GM10248 (cell line): ENCODE measurements at regions of chr11 and their contacts with region 1.

Region 1: GRCh38 chr11:12043959-12044819 is 35.8 kb upstream of the DKK3 start:
- DNase-seq: peak; percentile 68
- CTCF ChIP-seq: peak; percentile 90

Region 2: DNA sequence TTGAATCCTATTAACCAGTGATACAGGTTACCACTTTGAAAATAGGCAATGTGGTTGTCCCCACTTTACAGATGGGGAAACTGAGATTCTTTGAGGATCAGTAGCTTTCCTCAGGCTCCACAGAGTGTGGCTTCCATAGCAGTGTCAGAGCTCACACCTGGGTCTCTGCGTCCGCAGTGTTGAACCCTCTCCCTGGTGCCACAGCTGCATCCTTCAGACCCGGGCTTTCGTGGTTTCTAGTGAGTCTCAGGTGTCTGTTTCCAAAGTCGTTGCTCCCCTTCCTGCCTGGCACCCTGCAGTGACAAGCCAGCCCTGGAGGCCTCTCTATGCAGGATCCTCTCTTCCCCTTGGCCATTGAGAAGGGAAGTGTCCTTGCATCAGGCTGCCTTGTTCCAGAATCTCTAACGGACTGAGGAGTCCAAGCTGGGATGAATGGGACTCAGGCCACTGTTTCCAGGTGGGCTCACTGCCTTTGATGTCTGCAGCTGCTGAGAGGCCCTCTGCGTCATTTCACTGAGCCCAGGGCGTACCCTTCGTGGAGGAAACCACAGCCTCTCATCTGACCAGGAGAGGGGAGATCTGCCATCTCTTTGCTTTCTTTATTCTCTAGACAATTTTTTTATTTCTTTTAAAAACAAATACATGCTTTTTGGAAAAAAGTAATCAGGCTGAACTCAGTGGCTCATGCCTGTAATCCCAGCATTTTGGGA is 17.8 kb after region 1 on chr11:
- CTCF ChIA-PET with region 1: interaction called, 12 read pairs
- POLR2A ChIA-PET with region 1: no interaction called
- DNase-seq: no peak
- CTCF ChIP-seq: no peak

Region 3: GRCh38 chr11:12122083-12122482 is 77.9 kb after region 1 on chr11:
- CTCF ChIA-PET with region 1: no interaction called
- POLR2A ChIA-PET with region 1: no interaction called
- DNase-seq: no peak
- CTCF ChIP-seq: peak; percentile 10

Region 4: GRCh38 chr11:12269104-12269441 is 224.9 kb after region 1 on chr11:
- CTCF ChIA-PET with region 1: interaction called, 12 read pairs
- POLR2A ChIA-PET with region 1: no interaction called
- DNase-seq: no peak
- CTCF ChIP-seq: no peak